ENCODE measurements at regions of chr11 and their contacts with region 1.

Region 1: DNA sequence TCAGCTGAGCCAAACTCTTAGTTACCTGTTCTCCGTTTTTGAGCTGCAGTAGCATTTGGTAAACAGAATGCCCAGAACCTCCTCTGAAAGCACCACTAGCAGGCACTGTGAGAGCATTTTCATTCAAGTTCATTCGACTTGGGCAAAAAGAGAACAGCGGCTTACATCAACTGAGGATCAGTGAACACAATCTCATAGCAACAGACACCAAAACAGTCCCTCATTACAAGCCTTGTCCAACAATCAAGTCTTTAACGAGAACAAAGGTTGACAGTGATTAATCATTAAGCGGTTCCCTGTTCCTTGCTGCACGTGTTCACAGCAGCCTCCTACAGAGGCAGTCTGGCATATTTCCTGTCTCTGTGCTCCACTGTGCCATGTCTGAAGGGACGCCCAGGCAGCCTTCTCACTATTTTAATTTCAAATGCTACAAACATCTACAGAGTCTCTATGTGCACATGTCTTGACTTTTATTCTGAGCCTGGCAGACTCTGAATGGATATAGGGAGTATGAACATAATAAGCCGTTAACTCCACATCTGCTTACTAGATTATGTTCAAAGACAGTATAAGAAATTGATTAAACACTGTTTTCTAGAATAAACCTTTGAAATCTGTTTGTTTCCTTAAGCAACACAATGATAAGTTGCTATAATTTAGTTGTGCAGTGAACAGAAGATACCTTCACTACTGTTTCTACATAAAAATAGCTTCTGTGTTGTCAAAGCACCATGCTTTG is 88.3 kb upstream of the MTMR2 start:
- DNase-seq: peak; percentile 25 to 84 (median 61)
- ATAC-seq: peak; percentile 73
- H3K4me3 ChIP-seq: no peak overlapping the region
- H3K4me3 Mint-ChIP-seq: peak overlapping the region; percentile 33
- H3K27ac ChIP-seq: peak overlapping the region; percentile 48 to 49
- H3K27ac Mint-ChIP-seq: peak overlapping the region; percentile 94
- H3K4me1 ChIP-seq: peaks cover 55% of the 10 kb centered on the region
- H3K4me1 Mint-ChIP-seq: peaks cover 17% of the 10 kb centered on the region
- H3K27me3 ChIP-seq: no peaks in the 10 kb centered on the region
- H3K27me3 Mint-ChIP-seq: no peaks in the 10 kb centered on the region
- CTCF ChIP-seq: peak; percentile 52

Region 2: GRCh38 chr11:96035031-96035739 is 22.9 kb after region 1 on chr11:
- CTCF ChIA-PET with region 1: interaction called, 4 read pairs
- POLR2A ChIA-PET with region 1: interaction called, 4 read pairs
- intact Hi-C with region 1: loop called in 1 of 2 experiments (anchors 2 kb)
- DNase-seq: no peak
- ATAC-seq: no peak
- H3K4me3 ChIP-seq: no peak overlapping the region
- H3K4me3 Mint-ChIP-seq: no peak overlapping the region
- H3K27ac ChIP-seq: no peak overlapping the region
- H3K27ac Mint-ChIP-seq: peak overlapping the region; percentile 78
- H3K4me1 ChIP-seq: no peaks in the 10 kb centered on the region
- H3K4me1 Mint-ChIP-seq: peaks cover 52% of the 10 kb centered on the region
- H3K27me3 ChIP-seq: no peaks in the 10 kb centered on the region
- H3K27me3 Mint-ChIP-seq: no peaks in the 10 kb centered on the region
- CTCF ChIP-seq: no peak

Region 3: GRCh38 chr11:96062134-96062533 is 49.9 kb after region 1 on chr11:
- CTCF ChIA-PET with region 1: no interaction called
- POLR2A ChIA-PET with region 1: no interaction called
- intact Hi-C with region 1: loop called in 1 of 2 experiments (anchors 10 kb)
- DNase-seq: peak in 3 of 9 experiments; percentile 27 to 57 (median 33)
- ATAC-seq: peak; percentile 98
- H3K4me3 ChIP-seq: no peak overlapping the region
- H3K4me3 Mint-ChIP-seq: no peak overlapping the region
- H3K27ac ChIP-seq: no peak overlapping the region
- H3K27ac Mint-ChIP-seq: peak overlapping the region; percentile 79
- H3K4me1 ChIP-seq: peaks cover 34% of the 10 kb centered on the region
- H3K4me1 Mint-ChIP-seq: peaks cover 62% of the 10 kb centered on the region
- H3K27me3 ChIP-seq: no peaks in the 10 kb centered on the region
- H3K27me3 Mint-ChIP-seq: no peaks in the 10 kb centered on the region
- CTCF ChIP-seq: no peak

Region 4: DNA sequence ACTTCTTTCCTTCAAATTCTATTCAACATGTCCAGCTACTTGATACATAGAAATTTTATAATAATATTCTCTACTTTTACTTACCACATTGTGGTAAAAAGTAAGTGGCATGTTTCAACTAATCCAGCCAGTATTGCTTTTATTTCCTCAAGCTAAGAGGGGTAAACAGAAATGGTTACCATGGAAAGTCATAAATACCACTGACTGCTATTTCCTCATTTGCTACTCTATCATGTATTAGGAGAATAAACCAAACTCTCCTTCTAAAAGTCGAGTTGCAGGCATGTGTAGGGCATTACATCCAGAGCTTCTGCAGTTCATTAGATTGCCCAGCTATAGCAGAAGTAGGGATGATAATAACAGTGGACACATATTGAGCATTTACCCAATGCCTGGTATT is 122.3 kb after region 1 on chr11:
- CTCF ChIA-PET with region 1: no interaction called
- POLR2A ChIA-PET with region 1: no interaction called
- intact Hi-C with region 1: no loop called
- DNase-seq: peak in 2 of 9 experiments; percentile 33 to 65
- ATAC-seq: peak; percentile 17
- H3K4me3 ChIP-seq: no peak overlapping the region
- H3K4me3 Mint-ChIP-seq: no peak overlapping the region
- H3K27ac ChIP-seq: peak overlapping the region in 1 of 2 experiments; percentile 2
- H3K27ac Mint-ChIP-seq: peak overlapping the region; percentile 75
- H3K4me1 ChIP-seq: peaks cover 33% of the 10 kb centered on the region
- H3K4me1 Mint-ChIP-seq: peaks cover 65% of the 10 kb centered on the region
- H3K27me3 ChIP-seq: no peaks in the 10 kb centered on the region
- H3K27me3 Mint-ChIP-seq: no peaks in the 10 kb centered on the region
- CTCF ChIP-seq: no peak

Region 5: DNA sequence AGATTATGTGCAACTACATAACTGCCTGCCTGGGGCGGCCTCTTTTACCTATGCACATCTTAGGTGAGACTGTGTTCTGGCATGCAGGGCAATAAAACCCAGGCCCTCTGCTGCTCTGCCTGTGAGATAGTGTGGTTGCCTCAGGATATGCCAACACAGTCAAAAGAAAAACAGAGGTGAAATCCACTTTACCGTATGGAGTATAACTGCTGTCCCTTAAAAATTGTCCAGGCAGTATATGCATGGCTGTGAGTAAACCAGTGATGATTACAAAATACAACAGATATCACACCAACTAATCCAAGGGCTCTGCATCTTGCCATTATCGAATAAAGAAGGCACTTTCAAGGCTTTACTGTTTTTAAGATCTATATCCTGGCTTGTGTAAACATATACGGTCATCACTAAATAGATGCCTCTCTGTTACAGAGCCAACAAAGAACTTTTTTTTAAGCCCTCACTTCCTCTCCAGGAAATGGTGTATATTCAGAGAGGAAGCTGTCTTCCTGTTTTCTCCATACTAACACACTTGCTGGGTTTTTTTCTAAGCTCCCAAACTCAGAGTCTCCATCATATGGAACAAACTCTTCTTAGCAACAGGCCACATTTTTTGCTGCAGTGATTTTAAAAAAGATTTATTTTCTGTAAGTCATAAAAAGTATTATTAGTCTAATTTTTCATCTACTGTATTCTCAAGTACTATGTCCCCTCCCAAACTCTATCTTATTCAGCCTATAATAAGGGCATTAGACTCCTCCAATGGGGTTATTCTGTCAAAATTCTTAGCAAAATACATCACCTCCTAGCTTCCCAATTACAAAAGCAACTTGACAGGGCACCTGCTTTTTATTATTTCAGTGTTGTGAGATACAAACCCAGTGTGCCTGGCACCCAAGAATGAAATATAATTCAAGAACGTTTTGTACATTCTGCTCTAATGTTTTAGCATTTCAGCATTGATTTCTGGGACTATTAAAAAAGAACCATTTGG is 195.5 kb after region 1 on chr11:
- CTCF ChIA-PET with region 1: interaction called, 3 read pairs
- POLR2A ChIA-PET with region 1: no interaction called
- intact Hi-C with region 1: loop called in 1 of 2 experiments (anchors 10 kb)
- DNase-seq: peak in 5 of 9 experiments; percentile 20 to 72 (median 43)
- ATAC-seq: peak; percentile 48
- H3K4me3 ChIP-seq: peak overlapping the region; percentile 4 to 26
- H3K4me3 Mint-ChIP-seq: peak overlapping the region; percentile 35
- H3K27ac ChIP-seq: peak overlapping the region; percentile 67 to 76
- H3K27ac Mint-ChIP-seq: peak overlapping the region; percentile 89
- H3K4me1 ChIP-seq: peaks cover 96% of the 10 kb centered on the region
- H3K4me1 Mint-ChIP-seq: peaks cover 84% of the 10 kb centered on the region
- H3K27me3 ChIP-seq: no peaks in the 10 kb centered on the region
- H3K27me3 Mint-ChIP-seq: no peaks in the 10 kb centered on the region
- CTCF ChIP-seq: no peak

Region 6: GRCh38 chr11:96254087-96254486 is 241.8 kb after region 1 on chr11:
- CTCF ChIA-PET with region 1: no interaction called
- POLR2A ChIA-PET with region 1: no interaction called
- intact Hi-C with region 1: loop called (anchors 5 to 10 kb)
- DNase-seq: peak in 4 of 9 experiments; percentile 20 to 73 (median 44)
- ATAC-seq: no peak
- H3K4me3 ChIP-seq: peak overlapping the region; percentile 0 to 1
- H3K4me3 Mint-ChIP-seq: peak overlapping the region; percentile 64
- H3K27ac ChIP-seq: peak overlapping the region; percentile 12 to 38
- H3K27ac Mint-ChIP-seq: peak overlapping the region; percentile 85
- H3K4me1 ChIP-seq: peaks cover 82% of the 10 kb centered on the region
- H3K4me1 Mint-ChIP-seq: peaks cover 90% of the 10 kb centered on the region
- H3K27me3 ChIP-seq: no peaks in the 10 kb centered on the region
- H3K27me3 Mint-ChIP-seq: no peaks in the 10 kb centered on the region
- CTCF ChIP-seq: no peak

Region 7: GRCh38 chr11:96293598-96294021 is 281.4 kb after region 1 on chr11:
- CTCF ChIA-PET with region 1: no interaction called
- POLR2A ChIA-PET with region 1: no interaction called
- intact Hi-C with region 1: no loop called
- DNase-seq: peak in 1 of 9 experiments; percentile 45
- ATAC-seq: peak; percentile 31
- H3K4me3 ChIP-seq: no peak overlapping the region
- H3K4me3 Mint-ChIP-seq: peak overlapping the region; percentile 59
- H3K27ac ChIP-seq: peak overlapping the region in 1 of 2 experiments; percentile 24
- H3K27ac Mint-ChIP-seq: peak overlapping the region; percentile 78
- H3K4me1 ChIP-seq: peaks cover 51% of the 10 kb centered on the region
- H3K4me1 Mint-ChIP-seq: peaks cover 81% of the 10 kb centered on the region
- H3K27me3 ChIP-seq: no peaks in the 10 kb centered on the region
- H3K27me3 Mint-ChIP-seq: no peaks in the 10 kb centered on the region
- CTCF ChIP-seq: no peak